Naive thymus-derived CD4-positive, alpha-beta T cell (primary cell): ENCODE measurements at regions of chr7 and their contacts with region 1.

Region 1: DNA sequence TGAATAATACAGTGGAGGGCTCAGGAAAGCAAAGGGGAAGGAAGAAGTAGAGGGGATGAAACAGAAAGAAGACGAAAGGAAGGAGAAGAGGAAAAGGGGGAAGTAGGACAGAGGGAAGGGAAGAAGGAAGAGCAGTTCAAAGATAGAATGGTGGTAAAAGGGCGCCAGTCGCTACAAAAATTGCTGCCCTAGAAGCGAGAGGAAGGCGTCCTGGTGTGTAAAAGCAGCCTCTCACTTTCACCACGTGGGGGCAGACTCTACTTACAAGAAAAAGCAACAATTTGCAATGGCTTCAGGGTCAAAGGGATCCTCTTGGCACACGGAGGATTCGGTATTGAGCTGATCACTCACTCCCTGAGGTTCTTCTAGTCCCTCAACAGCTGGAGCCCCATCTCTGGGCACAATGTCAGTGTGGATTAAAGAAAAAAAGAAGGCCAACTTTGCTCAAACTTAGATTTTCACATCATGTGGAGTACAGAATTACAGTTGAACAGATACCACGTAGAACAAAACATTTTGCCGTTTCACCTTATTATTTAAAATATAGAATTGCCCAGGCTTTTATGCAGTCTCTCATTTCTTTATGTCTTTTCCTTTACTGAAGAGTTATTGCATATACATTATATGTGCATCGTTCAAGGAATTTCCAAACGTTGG is 31.4 kb upstream of the NPVF start:
- DNase-seq: peak; percentile 23 to 82 (median 74)
- ATAC-seq: peak; percentile 86
- H3K4me3 ChIP-seq: no peak overlapping the region
- H3K4me3 Mint-ChIP-seq: peak overlapping the region in 8 of 10 donors; percentile 51 to 75 (median 68)
- H3K27ac ChIP-seq: no peak overlapping the region
- H3K27ac Mint-ChIP-seq: peak overlapping the region in 7 of 9 donors; percentile 56 to 91 (median 81)
- H3K4me1 ChIP-seq: peaks cover 0 to 23% of the 10 kb centered on the region in 2 donors
- H3K4me1 Mint-ChIP-seq: peaks cover 15 to 37% (median 33%) of the 10 kb centered on the region in 7 donors
- H3K27me3 ChIP-seq: no peaks in the 10 kb centered on the region
- H3K27me3 Mint-ChIP-seq: peaks cover 0 to 14% (median 7%) of the 10 kb centered on the region in 5 donors

Region 2: GRCh38 chr7:25318047-25318446 is 58.3 kb after region 1 on chr7:
- CTCF ChIA-PET with region 1: interaction called, 3 read pairs
- POLR2A ChIA-PET with region 1: no interaction called
- intact Hi-C with region 1: loop called in 1 of 2 experiments (anchors 2 kb)
- DNase-seq: no peak
- ATAC-seq: no peak
- H3K4me3 ChIP-seq: no peak overlapping the region
- H3K4me3 Mint-ChIP-seq: no peak overlapping the region
- H3K27ac ChIP-seq: no peak overlapping the region
- H3K27ac Mint-ChIP-seq: no peak overlapping the region
- H3K4me1 ChIP-seq: no peaks in the 10 kb centered on the region
- H3K4me1 Mint-ChIP-seq: peaks cover 0 to 7% (median 0%) of the 10 kb centered on the region in 7 donors
- H3K27me3 ChIP-seq: peaks cover 0 to 5% of the 10 kb centered on the region in 2 donors
- H3K27me3 Mint-ChIP-seq: peaks cover 0 to 11% (median 0%) of the 10 kb centered on the region in 5 donors

Region 3: DNA sequence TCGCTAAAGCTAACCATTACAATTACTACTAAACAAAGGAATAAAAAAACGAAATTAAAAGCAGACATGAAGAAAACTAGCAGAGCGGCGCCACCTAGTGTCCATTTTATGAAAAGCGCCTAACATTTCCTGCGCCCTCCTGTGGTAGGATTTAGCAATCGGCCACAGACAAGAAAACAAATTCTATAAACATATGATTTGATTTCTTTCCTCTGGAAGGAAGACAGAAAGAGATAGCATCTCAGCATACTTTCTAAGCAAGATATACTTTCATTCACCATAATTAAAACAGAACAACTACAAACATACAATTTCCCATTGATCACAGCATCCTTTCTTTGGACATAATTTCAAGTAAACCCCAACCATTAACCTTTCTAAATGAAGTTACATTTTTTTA is 306.2 kb after region 1 on chr7:
- CTCF ChIA-PET with region 1: interaction called, 105 read pairs
- POLR2A ChIA-PET with region 1: interaction called, 3 read pairs
- intact Hi-C with region 1: loop called (anchors 1 kb)
- DNase-seq: peak; percentile 37 to 77 (median 66)
- ATAC-seq: peak; percentile 85
- H3K4me3 ChIP-seq: no peak overlapping the region
- H3K4me3 Mint-ChIP-seq: peak overlapping the region in 4 of 10 donors; percentile 4 to 67 (median 45)
- H3K27ac ChIP-seq: no peak overlapping the region
- H3K27ac Mint-ChIP-seq: peak overlapping the region in 2 of 9 donors; percentile 8 to 25
- H3K4me1 ChIP-seq: no peaks in the 10 kb centered on the region
- H3K4me1 Mint-ChIP-seq: peaks cover 0 to 7% (median 7%) of the 10 kb centered on the region in 7 donors
- H3K27me3 ChIP-seq: no peaks in the 10 kb centered on the region
- H3K27me3 Mint-ChIP-seq: peaks cover 0 to 7% (median 0%) of the 10 kb centered on the region in 5 donors

Region 4: GRCh38 chr7:25694699-25695098 is 435.0 kb after region 1 on chr7:
- CTCF ChIA-PET with region 1: no interaction called
- POLR2A ChIA-PET with region 1: no interaction called
- intact Hi-C with region 1: no loop called
- DNase-seq: no peak
- ATAC-seq: no peak
- H3K4me3 ChIP-seq: no peak overlapping the region
- H3K4me3 Mint-ChIP-seq: no peak overlapping the region
- H3K27ac ChIP-seq: no peak overlapping the region
- H3K27ac Mint-ChIP-seq: no peak overlapping the region
- H3K4me1 ChIP-seq: no peaks in the 10 kb centered on the region
- H3K4me1 Mint-ChIP-seq: no peaks in the 10 kb centered on the region
- H3K27me3 ChIP-seq: no peaks in the 10 kb centered on the region
- H3K27me3 Mint-ChIP-seq: peaks cover 0 to 9% (median 3%) of the 10 kb centered on the region in 5 donors

Region 5: GRCh38 chr7:25851332-25852210 is 591.9 kb after region 1 on chr7:
- CTCF ChIA-PET with region 1: interaction called, 4 read pairs
- POLR2A ChIA-PET with region 1: no interaction called
- intact Hi-C with region 1: loop called (anchors 1 kb)
- DNase-seq: peak in 8 of 9 donors; percentile 43 to 69 (median 62)
- ATAC-seq: peak; percentile 84
- H3K4me3 ChIP-seq: no peak overlapping the region
- H3K4me3 Mint-ChIP-seq: peak overlapping the region; percentile 16 to 85 (median 76)
- H3K27ac ChIP-seq: no peak overlapping the region
- H3K27ac Mint-ChIP-seq: peak overlapping the region in 7 of 9 donors; percentile 5 to 79 (median 74)
- H3K4me1 ChIP-seq: peaks cover 3 to 9% of the 10 kb centered on the region in 2 donors
- H3K4me1 Mint-ChIP-seq: peaks cover 4 to 27% (median 19%) of the 10 kb centered on the region in 7 donors
- H3K27me3 ChIP-seq: peaks cover 29 to 50% of the 10 kb centered on the region in 2 donors
- H3K27me3 Mint-ChIP-seq: peaks cover 43 to 63% (median 59%) of the 10 kb centered on the region in 5 donors

Region 6: DNA sequence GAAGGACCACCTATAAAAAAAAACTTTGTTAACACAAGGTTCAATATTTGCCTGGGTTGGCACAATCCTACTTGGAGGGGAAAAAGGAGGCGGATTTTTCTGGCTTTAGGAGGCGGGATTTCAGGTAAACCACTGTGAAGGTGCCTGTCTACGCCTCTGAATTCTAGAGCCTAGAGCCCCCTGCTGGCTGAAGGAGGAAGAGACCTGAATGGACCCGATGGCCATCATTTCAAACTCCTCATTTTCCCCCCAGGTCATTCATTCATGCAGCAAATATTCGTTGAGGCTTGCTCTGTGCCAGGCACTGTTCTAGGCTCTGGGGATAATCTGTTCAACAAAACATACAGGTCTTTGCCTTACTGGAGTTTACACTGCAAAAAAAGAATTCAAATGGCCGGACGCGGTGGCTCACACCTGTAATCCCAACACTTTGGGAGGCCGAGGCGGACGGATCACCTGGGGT is 802.0 kb after region 1 on chr7:
- CTCF ChIA-PET with region 1: no interaction called
- POLR2A ChIA-PET with region 1: no interaction called
- intact Hi-C with region 1: loop called in 1 of 2 experiments (anchors 5 kb)
- DNase-seq: peak; percentile 37 to 71 (median 59)
- ATAC-seq: peak; percentile 88
- H3K4me3 ChIP-seq: no peak overlapping the region
- H3K4me3 Mint-ChIP-seq: no peak overlapping the region
- H3K27ac ChIP-seq: no peak overlapping the region
- H3K27ac Mint-ChIP-seq: no peak overlapping the region
- H3K4me1 ChIP-seq: no peaks in the 10 kb centered on the region
- H3K4me1 Mint-ChIP-seq: peaks cover 0 to 13% (median 0%) of the 10 kb centered on the region in 7 donors
- H3K27me3 ChIP-seq: no peaks in the 10 kb centered on the region
- H3K27me3 Mint-ChIP-seq: peaks cover 5 to 33% (median 15%) of the 10 kb centered on the region in 5 donors